B cell (primary cell): ENCODE measurements at regions of chr12 and their contacts with region 1.

Region 1: DNA sequence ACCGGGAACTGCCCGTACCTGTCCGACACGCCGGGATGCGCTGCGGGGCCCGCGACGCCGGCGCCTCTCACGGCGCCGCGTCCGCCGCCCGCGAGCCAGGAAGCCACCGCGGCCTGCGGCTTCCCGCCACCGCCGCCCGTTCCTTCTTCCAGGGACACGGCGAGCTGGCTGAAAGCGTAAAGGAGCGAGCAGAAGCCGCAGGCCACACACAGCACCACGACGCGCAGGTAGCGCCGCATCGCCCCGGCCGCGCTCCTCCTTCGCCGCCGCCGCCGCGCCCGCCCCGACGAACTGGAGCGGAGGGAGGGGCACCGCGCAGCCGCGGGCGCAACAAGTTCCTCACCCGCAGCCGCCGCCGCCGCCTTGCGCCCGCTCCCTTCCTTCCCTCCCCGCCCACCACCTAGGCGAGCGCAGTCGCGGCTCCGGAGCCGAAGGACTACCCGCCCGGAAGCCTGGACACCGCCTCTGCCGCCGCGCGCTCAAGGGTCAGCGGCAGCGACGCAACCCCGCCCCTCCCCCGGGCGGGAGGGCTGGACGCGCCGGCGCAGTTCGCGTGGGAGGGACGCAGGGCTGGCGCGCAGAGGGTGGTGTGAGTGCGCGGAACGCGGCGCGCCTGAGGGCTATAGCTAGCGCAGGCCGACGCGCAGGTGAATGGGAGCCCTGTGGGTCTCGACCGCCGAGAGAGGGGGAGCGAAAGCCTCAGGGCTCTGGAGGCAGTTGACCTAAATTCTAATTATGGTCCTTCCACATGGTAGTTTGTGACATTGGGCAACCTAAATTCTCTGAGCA is at the start of gene GXYLT1:
- DNase-seq: peak; percentile 90
- ATAC-seq: peak; percentile 91
- H3K4me3 ChIP-seq: peak within 1 kb of the TSS; percentile 60 to 78 (median 74)
- H3K4me3 Mint-ChIP-seq: peak within 1 kb of the TSS; percentile 94
- H3K27ac ChIP-seq: peak within 1 kb of the TSS in 1 of 2 donors; percentile 68
- H3K27ac Mint-ChIP-seq: peak within 1 kb of the TSS; percentile 88
- H3K4me1 ChIP-seq: peaks cover 21 to 27% of the 10 kb centered on the region in 2 donors
- H3K4me1 Mint-ChIP-seq: peaks cover 40% of the 10 kb centered on the region
- H3K27me3 ChIP-seq: no peaks in the 10 kb centered on the region
- H3K27me3 Mint-ChIP-seq: no peaks in the 10 kb centered on the region
- CTCF ChIP-seq: no peak
- total RNA-seq, gene GXYLT1: 9.4 and 10.4 TPM in 2 replicates

Region 2: GRCh38 chr12:42070036-42070435 is 74.6 kb before region 1 on chr12:
- CTCF ChIA-PET with region 1: no interaction called
- POLR2A ChIA-PET with region 1: no interaction called
- intact Hi-C with region 1: no loop called
- DNase-seq: no peak
- ATAC-seq: no peak
- H3K4me3 ChIP-seq: no peak overlapping the region
- H3K4me3 Mint-ChIP-seq: no peak overlapping the region
- H3K27ac ChIP-seq: no peak overlapping the region
- H3K27ac Mint-ChIP-seq: no peak overlapping the region
- H3K4me1 ChIP-seq: no peaks in the 10 kb centered on the region
- H3K4me1 Mint-ChIP-seq: no peaks in the 10 kb centered on the region
- H3K27me3 ChIP-seq: no peaks in the 10 kb centered on the region
- H3K27me3 Mint-ChIP-seq: no peaks in the 10 kb centered on the region
- CTCF ChIP-seq: no peak

Region 3: DNA sequence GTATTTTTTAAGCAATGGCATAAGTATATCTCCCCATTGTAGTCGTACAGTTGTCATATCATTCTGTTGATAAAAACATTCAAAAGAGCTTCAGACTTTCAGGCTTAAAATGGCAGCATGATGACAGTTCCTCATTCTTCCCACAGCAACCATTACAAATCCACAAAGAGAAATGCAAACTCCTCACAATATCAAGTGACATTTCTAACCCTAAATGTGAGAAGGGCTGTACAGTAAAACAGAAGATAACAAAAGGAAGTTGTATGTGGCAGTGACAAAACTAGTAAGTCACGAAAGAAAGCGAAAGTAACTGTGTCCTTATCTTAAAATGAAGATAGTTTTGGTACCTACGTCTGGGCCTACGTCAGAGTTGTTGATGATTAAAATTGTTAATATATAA is 46.6 kb before region 1 on chr12:
- CTCF ChIA-PET with region 1: no interaction called
- POLR2A ChIA-PET with region 1: no interaction called
- intact Hi-C with region 1: loop called (anchors 5 kb)
- DNase-seq: peak; percentile 74
- ATAC-seq: peak; percentile 73
- H3K4me3 ChIP-seq: peak overlapping the region in 4 of 5 experiments; percentile 13 to 70 (median 34)
- H3K4me3 Mint-ChIP-seq: peak overlapping the region; percentile 88
- H3K27ac ChIP-seq: peak overlapping the region; percentile 72 to 94
- H3K27ac Mint-ChIP-seq: peak overlapping the region; percentile 92
- H3K4me1 ChIP-seq: peaks cover 3 to 8% of the 10 kb centered on the region in 2 donors
- H3K4me1 Mint-ChIP-seq: peaks cover 30% of the 10 kb centered on the region
- H3K27me3 ChIP-seq: no peaks in the 10 kb centered on the region
- H3K27me3 Mint-ChIP-seq: no peaks in the 10 kb centered on the region
- CTCF ChIP-seq: no peak

Region 4: DNA sequence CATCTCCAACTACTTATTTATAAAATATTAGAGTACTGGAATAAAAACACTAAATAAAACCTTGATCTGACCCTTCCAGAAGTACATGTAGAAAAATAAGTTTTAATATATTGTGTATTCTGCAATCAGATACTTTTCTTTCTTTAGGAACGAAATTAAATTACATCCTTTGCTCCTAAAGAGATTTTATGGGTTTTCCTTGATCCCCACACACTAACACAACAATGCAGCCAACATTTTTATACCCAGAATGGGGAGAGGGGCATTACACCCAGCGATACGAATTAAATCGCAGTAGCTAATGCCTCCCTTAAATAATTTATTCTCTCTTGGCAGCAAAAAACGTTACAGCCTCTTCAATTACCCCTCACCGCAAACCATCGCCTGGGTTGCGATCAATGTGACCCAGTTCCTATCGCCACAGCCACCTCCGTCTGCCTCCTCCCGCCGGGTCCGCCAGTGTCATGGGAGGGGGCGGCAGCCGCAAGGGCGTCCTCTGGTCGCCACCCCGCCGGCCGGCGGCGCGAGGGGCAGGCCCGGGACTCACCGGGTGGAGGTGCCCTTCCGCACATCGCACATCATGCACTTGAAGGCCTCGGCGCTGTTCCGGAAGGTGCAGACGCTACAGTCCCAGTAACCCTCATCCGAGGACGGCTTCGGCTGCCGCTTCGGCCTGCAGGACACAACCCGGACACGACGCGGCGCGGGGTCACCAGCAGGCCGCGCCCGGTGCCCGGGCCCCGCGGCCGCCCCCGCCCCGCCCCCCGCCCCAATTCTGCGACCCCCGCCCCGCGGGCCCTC is 92.7 kb after region 1 on chr12:
- CTCF ChIA-PET with region 1: no interaction called
- POLR2A ChIA-PET with region 1: no interaction called
- intact Hi-C with region 1: loop called (anchors 1 kb)
- DNase-seq: peak; percentile 84
- ATAC-seq: peak; percentile 74
- H3K4me3 ChIP-seq: peak overlapping the region; percentile 48 to 84 (median 66)
- H3K4me3 Mint-ChIP-seq: peak overlapping the region; percentile 98
- H3K27ac ChIP-seq: peak overlapping the region; percentile 28 to 74
- H3K27ac Mint-ChIP-seq: peak overlapping the region; percentile 95
- H3K4me1 ChIP-seq: peaks cover 15 to 27% of the 10 kb centered on the region in 2 donors
- H3K4me1 Mint-ChIP-seq: peaks cover 35% of the 10 kb centered on the region
- H3K27me3 ChIP-seq: no peaks in the 10 kb centered on the region
- H3K27me3 Mint-ChIP-seq: no peaks in the 10 kb centered on the region
- CTCF ChIP-seq: peak; percentile 53

Region 5: DNA sequence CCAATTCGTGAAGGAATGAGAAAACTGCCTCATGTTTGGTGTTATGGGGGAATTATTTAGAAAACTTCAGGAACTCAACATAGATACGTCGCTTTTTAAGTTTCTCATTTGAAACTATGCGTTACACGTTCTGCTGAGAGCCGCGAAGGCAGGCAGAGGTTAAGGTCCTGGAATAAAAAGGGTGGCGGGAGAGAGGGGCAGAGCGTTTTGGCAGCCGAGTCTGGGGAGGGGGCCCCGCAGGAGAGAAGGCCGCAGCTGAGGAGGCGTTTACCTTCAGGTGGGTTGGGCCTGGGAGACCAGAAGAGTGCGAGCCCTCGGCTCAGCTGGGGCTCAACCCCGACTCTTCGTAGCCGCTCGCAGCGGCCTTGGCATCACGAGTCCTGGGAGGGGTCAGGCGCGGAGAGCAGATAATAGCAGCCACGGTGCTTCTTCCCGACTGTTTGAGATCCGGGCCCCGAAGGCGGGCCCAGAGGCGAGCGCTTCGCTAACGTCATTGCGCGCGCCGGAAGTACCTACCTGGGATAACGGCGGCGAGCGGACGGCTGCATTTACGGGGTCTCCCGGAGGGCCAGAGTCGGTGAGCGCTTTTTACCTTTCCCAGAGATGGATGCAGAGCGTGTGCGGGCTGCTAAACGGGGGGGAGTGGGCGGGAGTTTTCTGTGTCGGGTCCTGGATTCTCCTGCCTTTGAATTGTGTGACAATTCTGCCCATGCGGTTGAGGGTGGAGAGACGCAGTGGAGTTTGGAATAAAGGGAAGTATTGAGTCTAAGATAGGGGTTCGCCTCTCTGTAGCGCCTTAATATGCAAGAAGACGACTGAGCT is 181.3 kb after region 1 on chr12 and contains the starts of genes PPHLN1 and ZCRB1:
- CTCF ChIA-PET with region 1: interaction called, 3 read pairs
- POLR2A ChIA-PET with region 1: interaction called, 4 read pairs
- intact Hi-C with region 1: loop called (anchors 2 kb)
- DNase-seq: peak; percentile 87
- ATAC-seq: peak; percentile 88
- H3K4me3 ChIP-seq: peak within 1 kb of the TSS; percentile 60 to 98 (median 84)
- H3K4me3 Mint-ChIP-seq: peak within 1 kb of the TSS; percentile 95
- H3K27ac ChIP-seq: peak within 1 kb of the TSS; percentile 64 to 92
- H3K27ac Mint-ChIP-seq: peak within 1 kb of the TSS; percentile 96
- H3K4me1 ChIP-seq: peaks cover 29 to 39% of the 10 kb centered on the region in 2 donors
- H3K4me1 Mint-ChIP-seq: peaks cover 53% of the 10 kb centered on the region
- H3K27me3 ChIP-seq: no peaks in the 10 kb centered on the region
- H3K27me3 Mint-ChIP-seq: no peaks in the 10 kb centered on the region
- CTCF ChIP-seq: no peak
- total RNA-seq, gene PPHLN1: 99.5 and 104 TPM in 2 replicates
- total RNA-seq, gene ZCRB1: 23.2 and 27.1 TPM in 2 replicates

Region 6: GRCh38 chr12:43835656-43836474 is 1691.3 kb after region 1 on chr12 and contains the start of gene TMEM117:
- CTCF ChIA-PET with region 1: no interaction called
- POLR2A ChIA-PET with region 1: no interaction called
- intact Hi-C with region 1: loop called (anchors 10 kb)
- DNase-seq: peak; percentile 85
- ATAC-seq: peak; percentile 73
- H3K4me3 ChIP-seq: peak within 1 kb of the TSS; percentile 50 to 80 (median 73)
- H3K4me3 Mint-ChIP-seq: peak within 1 kb of the TSS; percentile 90
- H3K27ac ChIP-seq: peak within 1 kb of the TSS; percentile 79 to 93
- H3K27ac Mint-ChIP-seq: peak within 1 kb of the TSS; percentile 91
- H3K4me1 ChIP-seq: peaks cover 12% of the 10 kb centered on the region in 2 donors
- H3K4me1 Mint-ChIP-seq: peaks cover 19% of the 10 kb centered on the region
- H3K27me3 ChIP-seq: no peaks in the 10 kb centered on the region
- H3K27me3 Mint-ChIP-seq: no peaks in the 10 kb centered on the region
- CTCF ChIP-seq: no peak
- total RNA-seq, gene TMEM117: 10.4 and 10.7 TPM in 2 replicates